Heart left ventricle (tissue), 16 donors: ENCODE measurements at regions of chr15 and their contacts with region 1.

Region 1: GRCh38 chr15:96362755-96363651 is 32.5 kb downstream of the NR2F2 start:
- DNase-seq: no peak
- ATAC-seq: no peak
- H3K4me3 ChIP-seq: no peak overlapping the region
- H3K27ac ChIP-seq: no peak overlapping the region
- H3K4me1 ChIP-seq: peaks cover 0 to 27% (median 10%) of the 10 kb centered on the region in 12 donors
- H3K27me3 ChIP-seq: peaks cover 11 to 98% (median 77%) of the 10 kb centered on the region in 9 donors
- CTCF ChIP-seq: no peak
- POLR2A ChIP-seq: no peak

Region 2: GRCh38 chr15:96409215-96410138 is 46.5 kb after region 1 on chr15:
- intact Hi-C with region 1: loop called in 2 of 10 experiments (anchors 2 to 5 kb)
- DNase-seq: no peak
- ATAC-seq: no peak
- H3K4me3 ChIP-seq: peak overlapping the region in 11 of 12 donors; percentile 22 to 50 (median 40)
- H3K27ac ChIP-seq: no peak overlapping the region
- H3K4me1 ChIP-seq: peaks cover 0 to 19% (median 14%) of the 10 kb centered on the region in 12 donors
- H3K27me3 ChIP-seq: peaks cover 46 to 95% (median 80%) of the 10 kb centered on the region in 9 donors
- CTCF ChIP-seq: no peak
- POLR2A ChIP-seq: no peak